OCI-LY7 (cell line): ENCODE measurements at regions of chr2 and their contacts with region 1.

Region 1: DNA sequence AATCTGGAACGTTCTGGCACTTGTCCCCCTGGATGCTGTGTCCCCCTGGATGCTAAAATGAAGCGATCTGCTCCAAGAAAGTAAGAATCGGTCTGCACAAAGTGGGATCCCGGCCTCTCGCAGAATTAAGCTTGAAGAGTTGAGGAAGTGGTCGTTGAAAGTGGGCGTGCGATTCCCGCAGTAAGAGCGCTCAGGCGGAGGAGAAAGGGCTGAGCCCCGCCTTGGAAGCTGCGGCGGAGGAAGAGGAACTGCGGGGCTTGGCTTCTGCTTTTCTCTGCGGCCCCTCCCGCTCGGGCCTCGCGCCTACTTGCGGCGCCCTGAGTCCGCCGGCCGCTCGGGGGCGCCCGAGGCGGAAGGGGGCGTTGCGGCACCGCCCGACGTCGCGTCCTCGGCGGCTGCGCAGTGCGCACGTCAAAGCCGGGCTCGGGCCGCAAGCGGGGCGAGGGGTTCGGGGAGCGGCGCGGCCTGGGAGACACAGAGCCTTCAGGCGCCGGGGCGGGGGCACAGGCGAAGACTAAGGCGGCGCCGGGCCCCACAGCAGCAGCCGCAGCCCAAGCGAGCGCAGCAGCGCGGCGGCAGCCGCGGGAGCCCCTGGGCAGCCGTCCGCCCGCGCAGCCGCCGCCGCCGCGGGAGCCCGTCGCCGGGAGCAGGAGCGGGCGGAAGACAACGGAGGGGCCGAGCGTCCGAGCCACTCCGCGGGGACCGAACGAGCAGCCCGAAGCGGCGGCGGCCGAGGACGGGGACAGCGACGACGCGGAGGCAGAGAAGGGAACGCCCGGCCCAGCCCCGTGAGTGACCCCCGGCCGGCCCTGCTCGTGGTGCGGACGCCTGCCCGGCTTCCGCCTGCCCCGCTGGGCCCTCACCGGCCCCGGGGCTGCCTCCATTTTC is at the start of gene CAB39:
- DNase-seq: peak; percentile 94
- H3K4me3 ChIP-seq: peak within 1 kb of the TSS; percentile 89
- H3K27ac ChIP-seq: peak within 1 kb of the TSS; percentile 60
- H3K4me1 ChIP-seq: peaks cover 43% of the 10 kb centered on the region
- CTCF ChIP-seq: peak; percentile 80
- total RNA-seq, gene CAB39: 31.5 and 39.3 TPM in 2 replicates

Region 2: GRCh38 chr2:229921892-229922445 is 790.7 kb before region 1 on chr2 and contains the start of gene TRIP12:
- CTCF ChIA-PET with region 1: no interaction called
- POLR2A ChIA-PET with region 1: interaction called, 10 read pairs
- intact Hi-C with region 1: no loop called
- DNase-seq: peak; percentile 95
- H3K4me3 ChIP-seq: peak within 1 kb of the TSS; percentile 95
- H3K27ac ChIP-seq: peak within 1 kb of the TSS; percentile 85
- H3K4me1 ChIP-seq: peaks cover 19% of the 10 kb centered on the region
- CTCF ChIP-seq: no peak
- total RNA-seq, gene TRIP12: 80.0 and 94.0 TPM in 2 replicates

Region 3: DNA sequence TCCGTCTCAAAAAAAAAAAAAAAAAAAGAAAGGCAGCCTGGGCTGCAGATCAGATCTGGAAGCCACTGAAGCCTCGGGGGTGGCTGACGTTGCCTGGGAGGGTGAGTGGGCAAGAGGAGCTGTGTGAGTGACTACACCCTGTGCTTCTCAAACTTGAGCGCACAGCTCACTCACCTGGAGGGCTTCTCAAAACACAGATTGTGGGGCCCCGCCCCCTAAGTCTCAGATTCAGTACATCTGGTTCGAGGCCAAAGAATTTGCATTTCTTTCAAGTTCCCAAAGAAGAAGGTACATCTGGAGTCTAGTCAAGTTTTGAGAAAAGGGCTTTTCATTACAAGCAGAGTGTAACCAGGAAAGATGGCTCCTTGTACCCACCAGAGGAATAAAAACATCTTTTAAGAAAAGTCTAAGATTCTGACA is 97.8 kb before region 1 on chr2:
- CTCF ChIA-PET with region 1: no interaction called
- POLR2A ChIA-PET with region 1: interaction called, 4 read pairs
- intact Hi-C with region 1: loop called (anchors 5 kb)
- DNase-seq: peak; percentile 96
- H3K4me3 ChIP-seq: peak overlapping the region; percentile 45
- H3K27ac ChIP-seq: peak overlapping the region; percentile 57
- H3K4me1 ChIP-seq: peaks cover 26% of the 10 kb centered on the region
- CTCF ChIP-seq: peak; percentile 26; the same call in 1 of the 2 replicates

Region 4: DNA sequence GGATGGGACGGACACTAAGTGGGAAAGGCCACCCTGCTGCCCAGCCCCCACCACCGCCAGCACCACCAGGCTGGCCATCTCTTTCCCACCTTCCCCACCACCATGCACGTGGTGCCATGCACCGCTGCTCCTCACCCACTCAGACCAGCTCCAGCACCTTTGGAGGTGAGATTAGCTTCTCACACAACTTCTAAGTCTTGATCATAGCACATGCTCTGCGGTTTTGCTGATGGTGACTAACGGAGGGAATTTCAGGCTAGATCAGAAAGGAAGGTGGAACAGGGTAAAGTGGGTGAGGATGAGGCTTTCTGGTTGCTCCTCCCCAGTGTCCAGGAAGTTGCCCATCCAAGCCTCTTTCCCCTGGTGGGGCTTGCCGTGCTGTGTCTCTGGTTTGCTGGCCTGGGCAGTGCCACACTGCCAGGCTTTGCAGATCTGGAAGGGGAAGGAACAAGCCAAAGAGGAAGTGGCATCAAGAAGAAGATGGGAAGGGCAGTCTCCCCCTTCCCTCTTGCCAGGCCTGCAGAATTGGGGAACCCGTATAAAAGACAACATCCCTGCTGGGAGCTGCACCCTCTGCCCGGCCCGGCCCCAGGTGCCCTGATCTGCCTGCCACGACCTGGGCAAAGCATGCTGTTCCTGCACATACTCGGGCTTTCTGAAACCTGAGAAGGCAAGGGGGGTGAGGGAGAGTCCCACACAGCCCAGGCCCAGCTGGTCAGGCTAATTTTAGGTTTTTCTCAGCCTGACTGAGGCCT is 44.3 kb before region 1 on chr2:
- CTCF ChIA-PET with region 1: no interaction called
- POLR2A ChIA-PET with region 1: interaction called, 10 read pairs
- intact Hi-C with region 1: loop called (anchors 2 kb)
- DNase-seq: peak; percentile 37
- H3K4me3 ChIP-seq: no peak overlapping the region
- H3K27ac ChIP-seq: no peak overlapping the region
- H3K4me1 ChIP-seq: peaks cover 25% of the 10 kb centered on the region
- CTCF ChIP-seq: 0 out of 2 replicates have a peak, but pooled peaks have one; percentile 7

Region 5: DNA sequence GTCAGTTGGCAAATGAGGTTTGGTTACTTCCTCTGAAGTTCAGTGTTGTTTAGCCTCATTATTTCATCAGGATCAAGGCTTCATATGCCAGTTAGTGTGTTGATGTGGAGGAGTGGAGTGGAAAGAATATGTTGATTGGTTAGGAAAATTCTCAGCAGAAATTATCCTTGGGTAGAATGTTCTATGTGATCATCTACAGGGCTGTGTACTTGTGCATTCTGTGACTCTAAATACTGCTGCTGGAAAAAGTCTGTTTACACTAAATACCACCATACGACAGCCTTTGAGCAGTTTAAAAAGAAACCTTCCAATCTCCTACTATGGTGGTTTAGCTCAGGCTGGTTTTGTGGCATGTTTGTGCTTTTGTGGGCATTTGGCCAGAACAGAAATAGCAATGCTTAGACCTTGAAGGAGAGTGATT is 25.7 kb after region 1 on chr2:
- CTCF ChIA-PET with region 1: no interaction called
- POLR2A ChIA-PET with region 1: interaction called, 12 read pairs
- intact Hi-C with region 1: no loop called
- DNase-seq: no peak
- H3K4me3 ChIP-seq: no peak overlapping the region
- H3K27ac ChIP-seq: no peak overlapping the region
- H3K4me1 ChIP-seq: peaks cover 42% of the 10 kb centered on the region
- CTCF ChIP-seq: no peak

Region 6: GRCh38 chr2:230774348-230774951 is 61.8 kb after region 1 on chr2:
- CTCF ChIA-PET with region 1: no interaction called
- POLR2A ChIA-PET with region 1: no interaction called
- intact Hi-C with region 1: no loop called
- DNase-seq: no peak
- H3K4me3 ChIP-seq: no peak overlapping the region
- H3K27ac ChIP-seq: no peak overlapping the region
- H3K4me1 ChIP-seq: no peaks in the 10 kb centered on the region
- CTCF ChIP-seq: no peak

Region 7: DNA sequence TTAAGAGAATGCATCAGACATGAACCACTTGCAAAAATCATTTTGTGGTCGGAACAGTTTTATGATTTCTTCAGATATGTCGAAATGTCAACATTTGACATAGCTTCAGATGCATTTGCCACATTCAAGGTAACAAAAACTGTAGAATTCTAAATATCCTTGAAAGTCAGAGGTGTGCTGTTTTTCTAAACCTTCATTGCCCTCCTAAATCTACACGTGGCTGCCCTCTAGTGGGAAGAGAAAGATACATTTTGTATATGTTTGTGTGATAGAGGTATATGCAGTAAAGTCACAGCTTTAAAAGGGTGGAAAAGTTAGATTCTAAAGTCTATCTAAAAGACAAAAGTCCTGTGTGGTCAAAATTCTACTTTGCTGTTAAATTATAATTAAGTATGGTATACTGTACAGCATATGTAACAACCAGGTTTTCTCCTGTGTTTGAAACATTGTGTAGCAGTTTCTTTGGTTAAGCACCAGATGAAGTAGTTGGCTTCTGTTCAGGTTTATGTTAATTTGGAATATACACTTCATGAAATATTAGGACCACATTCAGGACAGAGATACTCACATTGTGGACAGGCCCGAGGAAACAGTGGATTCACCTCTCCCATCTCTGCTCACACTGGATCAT is 86.2 kb after region 1 on chr2:
- CTCF ChIA-PET with region 1: interaction called, 7 read pairs
- POLR2A ChIA-PET with region 1: interaction called, 4 read pairs
- intact Hi-C with region 1: loop called (anchors 2 kb)
- DNase-seq: peak; percentile 70
- H3K4me3 ChIP-seq: no peak overlapping the region
- H3K27ac ChIP-seq: no peak overlapping the region
- H3K4me1 ChIP-seq: peaks cover 27% of the 10 kb centered on the region
- CTCF ChIP-seq: peak; percentile 98